Head of caudate nucleus (tissue), 42 donors: ENCODE measurements at regions of chr3 and their contacts with region 1.

Region 1: GRCh38 chr3:49553692-49554632 is at the start of gene BSN:
- DNase-seq: peak; percentile 76 to 96 (median 92)

Region 2: DNA sequence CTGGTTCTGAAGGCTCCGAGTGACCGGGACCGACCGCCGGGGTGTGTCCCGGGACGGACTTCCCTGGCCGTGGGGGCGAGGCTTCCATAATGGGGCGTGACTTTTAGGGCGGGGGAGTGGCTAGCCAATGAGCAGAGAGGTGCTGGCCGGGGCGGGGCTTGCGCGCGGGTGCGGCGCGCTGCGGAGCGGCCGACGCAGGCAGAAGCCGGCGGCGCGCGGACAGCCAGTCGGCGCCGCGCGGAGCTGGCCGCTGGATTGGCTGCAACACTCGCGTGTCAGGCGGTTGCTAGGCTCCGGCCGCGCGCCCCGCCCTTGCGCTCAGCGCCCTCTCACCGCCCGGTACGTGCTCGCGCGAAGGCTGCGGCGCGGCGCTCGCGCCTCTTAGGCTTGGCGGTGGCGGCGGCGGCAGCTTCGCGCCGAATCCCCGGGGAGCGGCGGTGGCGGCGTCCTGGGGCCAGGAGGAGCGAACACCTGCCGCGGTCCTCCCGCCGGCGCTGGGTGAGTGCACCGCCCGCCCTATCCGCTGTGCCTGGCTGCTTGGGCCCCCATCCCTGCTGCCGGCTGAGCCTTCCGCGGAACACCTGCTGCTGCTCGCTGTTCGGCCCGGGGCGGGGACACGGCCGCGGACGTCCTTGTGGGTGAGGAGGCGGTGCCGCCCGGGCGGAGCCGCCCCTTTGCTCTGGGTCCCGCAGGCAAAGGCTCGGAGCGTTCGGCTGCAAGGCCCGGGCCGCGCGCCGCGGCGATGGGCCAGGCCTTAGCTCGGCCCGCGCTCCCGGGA is 83.8 kb before region 1 on chr3 and contains the start of gene DAG1:
- intact Hi-C with region 1: loop called (anchors 5 kb)
- DNase-seq: peak; percentile 93 to 98 (median 97)